ENCODE measurements at regions of chr3 and their contacts with region 1.

Region 1: GRCh38 chr3:158790901-158791589 is 10.8 kb upstream of the MFSD1 start:
- DNase-seq: no peak
- H3K4me3 ChIP-seq: no peak overlapping the region
- CTCF ChIP-seq: peak; percentile 67

Region 2: GRCh38 chr3:158200955-158201354 is 590.1 kb before region 1 on chr3:
- CTCF ChIA-PET with region 1: no interaction called
- POLR2A ChIA-PET with region 1: no interaction called
- DNase-seq: no peak
- H3K4me3 ChIP-seq: no peak overlapping the region
- CTCF ChIP-seq: no peak

Region 3: GRCh38 chr3:158539414-158540014 is 251.5 kb before region 1 on chr3:
- CTCF ChIA-PET with region 1: interaction called, 91 read pairs
- POLR2A ChIA-PET with region 1: no interaction called
- DNase-seq: no peak
- H3K4me3 ChIP-seq: no peak overlapping the region
- CTCF ChIP-seq: peak; percentile 52

Region 4: GRCh38 chr3:158659454-158660237 is 131.4 kb before region 1 on chr3:
- CTCF ChIA-PET with region 1: interaction called, 436 read pairs
- POLR2A ChIA-PET with region 1: interaction called, 4 read pairs
- DNase-seq: peak; percentile 21
- H3K4me3 ChIP-seq: no peak overlapping the region
- CTCF ChIP-seq: peak; percentile 66

Region 5: GRCh38 chr3:158702815-158703481 is 88.1 kb before region 1 on chr3:
- CTCF ChIA-PET with region 1: interaction called, 14 read pairs
- POLR2A ChIA-PET with region 1: no interaction called
- DNase-seq: no peak
- H3K4me3 ChIP-seq: no peak overlapping the region
- CTCF ChIP-seq: no peak

Region 6: DNA sequence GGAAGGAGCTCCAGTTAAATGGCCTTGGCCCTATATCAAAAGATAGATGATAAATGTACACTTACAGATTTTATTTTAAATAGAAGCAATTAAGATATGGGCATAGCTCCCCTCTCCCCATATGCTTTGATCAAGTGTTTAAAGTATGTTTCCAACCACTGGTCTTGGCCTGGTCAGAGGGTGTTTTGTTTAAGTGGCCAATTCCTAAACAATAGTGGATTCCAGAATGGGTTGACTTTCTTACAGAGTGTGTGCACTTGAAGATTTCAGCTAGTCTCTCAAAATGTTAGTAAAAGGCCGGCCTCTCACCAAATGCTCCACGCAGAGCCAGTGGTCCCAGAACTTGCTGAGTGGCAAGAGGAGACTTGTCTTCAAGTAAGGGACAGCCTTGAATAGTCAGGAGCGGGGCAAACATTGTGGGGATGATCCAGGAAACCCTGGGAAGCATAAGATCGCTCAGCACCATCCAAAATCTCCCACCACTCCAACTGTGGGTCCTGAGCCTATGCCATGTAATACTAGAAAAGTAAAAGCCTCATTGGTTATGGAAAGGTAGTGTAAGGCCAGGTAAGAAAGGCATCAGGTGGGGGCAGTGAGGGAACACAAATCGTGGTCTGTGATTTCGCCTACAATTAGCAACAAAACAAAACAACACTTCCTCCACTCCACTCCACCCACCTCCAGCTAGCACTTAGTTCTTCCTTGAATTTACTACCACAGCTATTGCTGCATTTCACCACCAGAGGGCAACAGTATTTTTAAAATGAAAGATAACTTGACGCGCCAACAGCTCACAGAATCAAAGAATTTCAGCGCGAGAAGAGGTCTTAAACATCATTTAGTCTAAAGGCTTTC is 63.6 kb before region 1 on chr3:
- CTCF ChIA-PET with region 1: interaction called, 358 read pairs
- POLR2A ChIA-PET with region 1: interaction called, 4 read pairs
- DNase-seq: no peak
- H3K4me3 ChIP-seq: no peak overlapping the region
- CTCF ChIP-seq: peak; percentile 56

Region 7: GRCh38 chr3:159252772-159253384 is 461.8 kb after region 1 on chr3:
- CTCF ChIA-PET with region 1: interaction called, 13 read pairs
- POLR2A ChIA-PET with region 1: no interaction called
- DNase-seq: no peak
- H3K4me3 ChIP-seq: no peak overlapping the region
- CTCF ChIP-seq: peak; percentile 50

Measured in AG04449 (cell line).